A549 (cell line): ENCODE measurements at regions of chr2 and their contacts with region 1.

Region 1: GRCh38 chr2:218710687-218711549 is at the start of gene TTLL4:
- DNase-seq: peak; percentile 95
- ATAC-seq: peak; percentile 97
- H3K4me3 ChIP-seq: peak within 1 kb of the TSS; percentile 93
- H3K27ac ChIP-seq: peak within 1 kb of the TSS; percentile 95 to 98
- H3K4me1 ChIP-seq: peaks cover 10% of the 10 kb centered on the region; the same call in 2 of the 3 replicates
- CTCF ChIP-seq: peak; percentile 74
- EP300 ChIP-seq: no peak
- POLR2A ChIP-seq: peak; percentile 87
- RAD21 ChIP-seq: peak; percentile 58 to 73
- polyA plus RNA-seq, gene TTLL4: 26.2 and 37.0 TPM in 2 replicates

Region 2: DNA sequence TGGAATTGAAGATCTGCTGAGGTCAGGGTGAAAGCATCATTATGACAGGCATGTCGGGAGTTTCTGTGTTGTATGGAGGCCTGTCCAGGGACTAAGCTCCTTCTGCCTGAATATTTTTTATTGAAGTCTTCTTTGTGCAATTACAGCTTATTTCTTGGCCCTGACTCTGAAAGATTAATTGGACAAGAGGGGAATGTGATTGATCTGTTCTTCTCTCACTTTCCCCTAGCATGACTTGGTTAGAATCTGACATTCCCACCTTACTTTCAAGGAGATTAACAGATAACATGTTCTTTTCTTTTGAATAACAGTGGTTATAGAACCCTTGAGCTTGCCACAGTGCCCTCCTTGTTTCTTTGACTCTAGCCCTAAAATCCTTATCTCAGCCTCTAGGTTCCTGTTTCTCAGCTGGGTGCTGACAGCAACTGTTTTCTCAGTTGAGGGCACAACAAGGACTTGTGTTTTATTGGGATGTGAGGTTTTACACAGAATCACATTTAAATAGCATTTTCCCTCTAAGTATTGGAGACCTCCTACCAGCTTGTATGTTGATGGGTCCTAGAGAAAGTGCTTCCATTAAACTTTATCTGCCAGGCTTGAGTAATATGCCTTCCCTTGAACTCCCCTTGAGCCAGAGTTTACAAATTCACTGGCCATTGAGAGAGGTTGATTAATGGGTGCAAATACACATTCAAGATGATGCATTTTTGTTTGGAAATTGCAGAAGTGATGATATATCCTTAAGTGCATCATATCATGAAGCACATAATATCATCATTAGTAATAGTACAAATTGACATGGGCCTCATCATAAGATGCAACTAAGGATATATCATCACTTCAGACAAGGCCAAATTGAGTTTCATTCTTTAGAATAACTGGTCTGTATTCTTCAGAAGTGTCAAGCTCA is 12.2 kb after region 1 on chr2:
- CTCF ChIA-PET with region 1: interaction called, 20 read pairs
- POLR2A ChIA-PET with region 1: interaction called, 3 read pairs
- DNase-seq: no peak
- ATAC-seq: no peak
- H3K4me3 ChIP-seq: no peak overlapping the region
- H3K27ac ChIP-seq: no peak overlapping the region
- H3K4me1 ChIP-seq: 0 out of 3 replicates have a peak, but pooled peaks cover 8% of the 10 kb centered on the region
- CTCF ChIP-seq: no peak
- EP300 ChIP-seq: no peak
- POLR2A ChIP-seq: no peak
- RAD21 ChIP-seq: no peak

Region 3: GRCh38 chr2:218733171-218734021 is 22.5 kb after region 1 on chr2:
- CTCF ChIA-PET with region 1: interaction called, 12 read pairs
- POLR2A ChIA-PET with region 1: interaction called, 6 read pairs
- DNase-seq: peak; percentile 10 to 51
- ATAC-seq: peak in 1 of 2 experiments; percentile 50; a peak in 2 of 6 replicates
- H3K4me3 ChIP-seq: no peak overlapping the region
- H3K27ac ChIP-seq: peak overlapping the region in 1 of 2 experiments; percentile 72; a peak in 3 of 6 replicates
- H3K4me1 ChIP-seq: peaks cover 39% of the 10 kb centered on the region
- CTCF ChIP-seq: no peak
- EP300 ChIP-seq: no peak
- POLR2A ChIP-seq: no peak
- RAD21 ChIP-seq: no peak

Region 4: DNA sequence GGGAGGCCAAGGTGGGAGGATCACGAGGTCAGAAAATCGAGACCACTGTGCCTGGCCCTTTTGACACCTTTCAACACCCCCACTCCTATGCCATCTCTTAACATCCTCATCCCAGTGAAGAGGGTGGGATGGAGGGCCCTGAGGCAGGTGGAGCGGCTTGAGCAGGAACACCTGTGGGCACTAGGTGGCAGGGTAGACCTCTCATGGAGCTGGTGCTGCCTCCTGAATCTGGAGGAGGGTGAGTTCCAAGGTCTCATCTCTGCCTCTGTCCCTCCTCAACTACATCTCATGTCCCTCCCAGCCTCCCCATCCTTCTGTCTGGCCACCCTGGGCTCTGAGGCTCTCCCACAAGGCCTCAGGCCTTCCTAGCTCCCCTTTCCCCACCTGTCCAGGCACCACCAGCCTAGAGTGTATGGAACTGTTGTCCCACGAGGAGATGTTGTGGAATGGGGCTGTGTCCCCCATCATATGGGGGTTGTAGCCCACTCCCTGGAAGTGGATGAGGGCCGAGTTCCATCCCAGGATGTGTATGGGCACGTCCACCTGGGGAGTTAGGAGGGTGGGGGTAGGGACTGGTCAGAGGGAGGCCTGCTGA is 299.3 kb after region 1 on chr2:
- CTCF ChIA-PET with region 1: no interaction called
- POLR2A ChIA-PET with region 1: no interaction called
- DNase-seq: peak; percentile 56 to 64
- ATAC-seq: peak; percentile 93 to 96
- H3K4me3 ChIP-seq: no peak overlapping the region
- H3K27ac ChIP-seq: no peak overlapping the region
- H3K4me1 ChIP-seq: no peaks in the 10 kb centered on the region
- CTCF ChIP-seq: peak; percentile 38; the same call in 2 of the 3 replicates
- EP300 ChIP-seq: no peak
- POLR2A ChIP-seq: no peak
- RAD21 ChIP-seq: peak; percentile 32 to 59; a peak in 3 of 5 replicates

Region 5: DNA sequence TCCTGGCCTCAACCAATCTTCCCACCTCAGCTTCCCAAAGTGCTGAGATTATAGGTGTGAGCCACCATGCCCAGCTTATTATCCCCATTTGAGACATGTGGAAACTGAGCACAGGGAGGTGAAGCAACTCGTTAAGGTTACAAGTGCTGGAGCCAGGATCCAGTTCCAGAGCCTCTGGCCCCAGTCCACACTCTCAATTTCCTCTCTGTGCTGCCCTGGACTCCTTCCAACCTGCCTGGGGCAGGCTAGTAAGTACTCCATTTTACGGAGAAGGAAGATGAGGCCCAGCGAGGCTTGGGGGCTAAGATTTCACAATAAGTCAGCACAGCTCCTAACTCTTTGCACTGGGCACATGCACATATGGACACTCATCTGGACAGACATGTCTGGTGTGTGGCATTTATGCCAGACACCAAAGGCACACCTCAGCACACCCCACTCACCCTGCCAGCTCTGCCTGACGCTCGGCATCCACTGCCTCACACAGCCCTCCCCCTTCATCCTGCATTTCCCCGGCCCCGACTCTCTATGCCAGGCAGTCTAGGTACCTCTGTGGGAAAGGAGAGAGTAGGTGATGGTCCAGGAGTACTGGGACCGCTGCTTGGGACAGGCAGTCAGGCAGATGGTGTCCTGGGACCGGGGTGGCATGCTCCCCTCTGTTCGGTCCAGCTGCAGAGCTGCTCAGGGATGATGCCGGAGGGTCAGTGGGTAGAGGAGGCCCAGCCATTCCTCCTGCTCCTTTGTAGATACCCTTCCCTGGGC is 309.9 kb after region 1 on chr2:
- CTCF ChIA-PET with region 1: no interaction called
- POLR2A ChIA-PET with region 1: no interaction called
- DNase-seq: no peak
- ATAC-seq: no peak
- H3K4me3 ChIP-seq: no peak overlapping the region
- H3K27ac ChIP-seq: no peak overlapping the region
- H3K4me1 ChIP-seq: no peaks in the 10 kb centered on the region
- CTCF ChIP-seq: no peak
- EP300 ChIP-seq: no peak
- POLR2A ChIP-seq: no peak
- RAD21 ChIP-seq: no peak